ENCODE measurements at regions of chrX and their contacts with region 1.

Region 1: DNA sequence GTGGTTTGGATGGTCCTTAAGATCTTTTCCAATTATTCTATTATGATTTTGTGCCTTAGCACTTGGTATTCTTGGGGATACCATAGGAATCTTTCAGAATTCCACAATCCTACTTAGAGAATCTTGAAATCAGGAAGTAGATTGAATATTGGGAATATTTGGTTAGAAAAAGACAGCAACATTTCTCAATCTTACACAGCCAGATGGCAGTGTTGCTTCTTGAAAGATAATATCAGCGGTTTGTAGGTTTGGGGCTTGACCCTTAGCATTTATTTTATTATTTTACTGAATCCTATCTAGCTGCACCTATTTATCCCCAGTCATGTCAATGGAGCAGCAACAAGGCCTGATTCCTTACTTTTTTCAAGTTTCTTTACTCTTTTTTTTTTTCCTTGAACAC is 28.6 kb downstream of the MAGEB1 start:
- DNase-seq: peak in 1 of 2 donors; percentile 10
- H3K4me3 ChIP-seq: no peak overlapping the region
- H3K27ac ChIP-seq: no peak overlapping the region
- H3K4me1 ChIP-seq: no peaks in the 10 kb centered on the region
- H3K27me3 ChIP-seq: no peaks in the 10 kb centered on the region
- CTCF ChIP-seq: peak in 2 of 7 experiments; percentile 13 to 17
- EP300 ChIP-seq: no peak
- POLR2A ChIP-seq: no peak

Region 2: GRCh38 chrX:30085571-30085970 is 189.9 kb before region 1 on chrX:
- intact Hi-C with region 1: no loop called
- DNase-seq: no peak
- H3K4me3 ChIP-seq: no peak overlapping the region
- H3K27ac ChIP-seq: no peak overlapping the region
- H3K4me1 ChIP-seq: no peaks in the 10 kb centered on the region
- H3K27me3 ChIP-seq: no peaks in the 10 kb centered on the region
- CTCF ChIP-seq: no peak
- EP300 ChIP-seq: no peak
- POLR2A ChIP-seq: no peak

Region 3: DNA sequence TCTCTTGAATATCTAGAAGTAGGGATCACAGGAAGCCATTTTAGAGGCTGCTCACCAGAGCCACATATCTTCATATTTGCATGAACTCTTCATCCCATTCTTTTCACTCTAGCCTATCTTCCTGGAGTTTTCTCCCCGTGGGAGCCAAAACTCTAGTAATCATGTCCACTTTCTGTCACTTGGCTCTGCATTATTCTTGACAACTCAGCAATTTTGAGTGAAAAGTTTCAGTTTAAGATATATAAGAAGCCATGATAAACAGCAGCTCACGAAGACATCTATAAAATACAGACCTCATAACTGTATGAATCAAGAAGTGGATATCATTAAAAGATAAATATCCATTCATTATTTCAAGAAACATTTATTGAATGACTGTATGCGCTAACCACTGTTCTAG is 112.8 kb after region 1 on chrX:
- intact Hi-C with region 1: no loop called
- DNase-seq: no peak
- H3K4me3 ChIP-seq: no peak overlapping the region
- H3K27ac ChIP-seq: no peak overlapping the region
- H3K4me1 ChIP-seq: no peaks in the 10 kb centered on the region
- H3K27me3 ChIP-seq: no peaks in the 10 kb centered on the region
- CTCF ChIP-seq: no peak
- EP300 ChIP-seq: no peak
- POLR2A ChIP-seq: no peak

Region 4: GRCh38 chrX:30504309-30504708 is 228.8 kb after region 1 on chrX:
- intact Hi-C with region 1: loop called (anchors 10 kb)
- DNase-seq: peak in 1 of 2 donors; percentile 64
- H3K4me3 ChIP-seq: no peak overlapping the region
- H3K27ac ChIP-seq: no peak overlapping the region
- H3K4me1 ChIP-seq: no peaks in the 10 kb centered on the region
- H3K27me3 ChIP-seq: no peaks in the 10 kb centered on the region
- CTCF ChIP-seq: peak in 4 of 7 experiments; percentile 14 to 47 (median 26)
- EP300 ChIP-seq: no peak
- POLR2A ChIP-seq: no peak

Measured in stomach (tissue), 19 donors.